Ascending aorta (tissue), 2 donors: ENCODE measurements at regions of chr5 and their contacts with region 1.

Region 1: GRCh38 chr5:43389679-43390329 is 22.4 kb downstream of the CCL28 start:
- DNase-seq: peak in 1 of 2 donors; percentile 71
- H3K4me3 ChIP-seq: no peak overlapping the region
- H3K27ac ChIP-seq: no peak overlapping the region
- H3K4me1 ChIP-seq: no peaks in the 10 kb centered on the region
- H3K27me3 ChIP-seq: no peaks in the 10 kb centered on the region
- CTCF ChIP-seq: peak; percentile 33 to 73 (median 57)

Region 2: GRCh38 chr5:43105369-43106289 is 284.2 kb before region 1 on chr5:
- intact Hi-C with region 1: loop called (anchors 10 kb)
- DNase-seq: peak; percentile 61 to 93
- H3K4me3 ChIP-seq: peak overlapping the region; percentile 46 to 54
- H3K27ac ChIP-seq: no peak overlapping the region
- H3K4me1 ChIP-seq: no peaks in the 10 kb centered on the region
- H3K27me3 ChIP-seq: no peaks in the 10 kb centered on the region
- CTCF ChIP-seq: peak; percentile 97 to 99 (median 97)

Region 3: GRCh38 chr5:43680286-43680685 is 290.5 kb after region 1 on chr5:
- intact Hi-C with region 1: no loop called
- DNase-seq: no peak
- H3K4me3 ChIP-seq: no peak overlapping the region
- H3K27ac ChIP-seq: peak overlapping the region in 1 of 2 donors; percentile 17
- H3K4me1 ChIP-seq: peaks cover 3 to 35% of the 10 kb centered on the region in 2 donors
- H3K27me3 ChIP-seq: no peaks in the 10 kb centered on the region
- CTCF ChIP-seq: no peak